ENCODE measurements at regions of chr14 and their contacts with region 1.

Region 1: GRCh38 chr14:75176142-75176820 is at the start of gene TMED10:
- DNase-seq: peak; percentile 93
- H3K4me3 Mint-ChIP-seq: peak within 1 kb of the TSS; percentile 91
- H3K27ac Mint-ChIP-seq: peak within 1 kb of the TSS; percentile 97
- H3K4me1 Mint-ChIP-seq: peaks cover 43% of the 10 kb centered on the region
- H3K27me3 Mint-ChIP-seq: no peaks in the 10 kb centered on the region
- total RNA-seq, gene TMED10: 151 to 156 TPM

Region 2: GRCh38 chr14:74762917-74763802 is 413.1 kb before region 1 on chr14 and contains the start of gene YLPM1:
- CTCF ChIA-PET with region 1: no interaction called
- intact Hi-C with region 1: loop called (anchors 2 kb)
- DNase-seq: peak; percentile 94
- H3K4me3 Mint-ChIP-seq: peak within 1 kb of the TSS; percentile 94
- H3K27ac Mint-ChIP-seq: peak within 1 kb of the TSS; percentile 92
- H3K4me1 Mint-ChIP-seq: peaks cover 48% of the 10 kb centered on the region
- H3K27me3 Mint-ChIP-seq: no peaks in the 10 kb centered on the region
- total RNA-seq, gene YLPM1: 46.5 to 47.0 TPM

Region 3: DNA sequence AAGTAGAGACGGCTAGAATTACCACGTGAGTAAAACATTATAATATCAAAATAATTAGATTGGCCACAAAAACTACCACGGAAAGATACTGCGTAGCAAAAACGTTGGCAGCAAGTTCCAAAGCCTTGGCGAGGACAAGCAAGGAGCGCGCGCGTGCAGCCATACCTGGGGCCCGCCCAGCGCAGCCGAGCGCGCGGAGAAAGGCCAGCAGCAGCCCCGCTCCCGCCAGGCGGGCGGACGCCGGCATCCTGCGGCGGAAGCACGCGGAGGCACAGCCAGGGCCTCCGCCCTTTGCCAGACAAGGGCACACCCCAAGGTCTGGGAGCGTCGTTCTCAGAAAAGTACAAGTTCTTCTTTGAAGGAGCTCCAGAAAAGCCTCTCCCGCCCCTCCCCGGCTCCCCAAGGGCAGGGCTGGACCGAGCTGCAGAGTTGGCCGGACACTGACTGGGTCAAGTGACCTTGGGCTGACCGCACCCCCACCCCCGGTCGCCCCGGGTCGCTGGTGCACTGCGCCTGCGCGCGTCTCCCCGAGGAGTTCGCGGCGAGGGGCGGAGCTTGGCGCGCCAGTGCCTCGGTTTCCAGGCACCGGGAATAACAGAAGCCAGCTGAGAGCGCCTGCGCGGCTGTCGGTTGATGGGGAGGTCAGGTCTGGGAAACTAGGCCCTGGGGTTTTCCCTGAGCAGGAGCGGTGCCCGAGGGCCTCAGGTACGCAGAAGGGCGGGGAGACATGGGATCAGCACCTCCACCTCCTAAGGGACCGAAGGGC is 107.1 kb before region 1 on chr14 and contains the start of gene ZC2HC1C:
- CTCF ChIA-PET with region 1: no interaction called
- intact Hi-C with region 1: loop called (anchors 2 kb)
- DNase-seq: peak; percentile 65
- H3K4me3 Mint-ChIP-seq: peak within 1 kb of the TSS; percentile 11
- H3K27ac Mint-ChIP-seq: no peak within 1 kb of the TSS
- H3K4me1 Mint-ChIP-seq: peaks cover 5% of the 10 kb centered on the region
- H3K27me3 Mint-ChIP-seq: no peaks in the 10 kb centered on the region
- total RNA-seq, gene ZC2HC1C: 0.64 to 0.86 TPM

Region 4: DNA sequence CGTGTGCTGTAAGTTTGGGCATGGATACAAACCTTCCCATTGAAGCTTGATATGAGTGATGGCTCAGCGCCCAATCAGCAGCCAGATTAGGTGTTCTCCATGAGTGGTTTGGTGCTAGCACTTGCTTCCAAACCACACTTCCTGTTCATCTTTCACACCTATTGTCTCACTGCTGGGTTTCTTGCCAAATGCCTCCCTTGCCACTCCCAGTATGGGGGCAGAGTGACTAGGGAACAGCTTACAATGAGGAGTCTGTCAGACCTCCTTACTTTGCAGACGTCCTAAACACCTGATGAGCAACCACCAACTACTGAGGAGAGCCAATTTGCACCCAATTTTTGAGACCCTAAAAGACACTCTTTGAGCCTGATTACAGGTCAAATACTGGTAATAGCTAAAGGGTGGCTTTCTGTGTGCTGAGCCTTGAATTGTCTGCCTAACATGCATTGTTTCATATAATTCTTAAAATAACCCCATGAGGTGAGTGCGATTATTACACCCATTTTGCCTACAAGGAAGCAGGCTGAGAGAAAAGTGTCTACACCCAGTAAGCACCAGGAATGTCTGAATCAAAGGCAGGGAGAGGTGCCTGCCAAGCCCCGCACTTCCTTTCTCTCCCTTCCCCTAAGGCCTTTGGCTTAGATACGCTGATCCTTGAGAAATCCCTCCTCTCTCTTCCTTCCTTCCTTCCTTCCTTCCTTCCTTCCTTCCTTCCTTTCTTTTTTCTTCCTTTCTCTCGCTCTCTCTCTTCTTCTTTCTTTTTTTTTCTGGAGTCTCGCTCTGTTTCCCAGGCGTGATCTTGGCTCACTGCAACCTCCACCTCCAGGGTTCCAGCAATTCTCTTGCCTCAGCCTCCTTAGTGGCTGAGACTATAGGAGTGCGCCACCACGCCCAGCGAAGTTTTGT is 54.1 kb after region 1 on chr14:
- CTCF ChIA-PET with region 1: no interaction called
- intact Hi-C with region 1: loop called (anchors 1 kb)
- DNase-seq: peak; percentile 81
- H3K4me3 Mint-ChIP-seq: no peak overlapping the region
- H3K27ac Mint-ChIP-seq: no peak overlapping the region
- H3K4me1 Mint-ChIP-seq: peaks cover 46% of the 10 kb centered on the region
- H3K27me3 Mint-ChIP-seq: no peaks in the 10 kb centered on the region

Region 5: DNA sequence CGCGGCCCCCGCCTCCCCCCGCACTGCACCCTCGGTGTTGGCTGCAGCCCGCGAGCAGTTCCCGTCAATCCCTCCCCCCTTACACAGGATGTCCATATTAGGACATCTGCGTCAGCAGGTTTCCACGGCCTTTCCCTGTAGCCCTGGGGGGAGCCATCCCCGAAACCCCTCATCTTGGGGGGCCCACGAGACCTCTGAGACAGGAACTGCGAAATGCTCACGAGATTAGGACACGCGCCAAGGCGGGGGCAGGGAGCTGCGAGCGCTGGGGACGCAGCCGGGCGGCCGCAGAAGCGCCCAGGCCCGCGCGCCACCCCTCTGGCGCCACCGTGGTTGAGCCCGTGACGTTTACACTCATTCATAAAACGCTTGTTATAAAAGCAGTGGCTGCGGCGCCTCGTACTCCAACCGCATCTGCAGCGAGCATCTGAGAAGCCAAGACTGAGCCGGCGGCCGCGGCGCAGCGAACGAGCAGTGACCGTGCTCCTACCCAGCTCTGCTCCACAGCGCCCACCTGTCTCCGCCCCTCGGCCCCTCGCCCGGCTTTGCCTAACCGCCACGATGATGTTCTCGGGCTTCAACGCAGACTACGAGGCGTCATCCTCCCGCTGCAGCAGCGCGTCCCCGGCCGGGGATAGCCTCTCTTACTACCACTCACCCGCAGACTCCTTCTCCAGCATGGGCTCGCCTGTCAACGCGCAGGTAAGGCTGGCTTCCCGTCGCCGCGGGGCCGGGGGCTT is 102.3 kb after region 1 on chr14 and contains the start of gene FOS:
- CTCF ChIA-PET with region 1: no interaction called
- intact Hi-C with region 1: loop called (anchors 1 kb)
- DNase-seq: peak; percentile 92
- H3K4me3 Mint-ChIP-seq: peak within 1 kb of the TSS; percentile 93
- H3K27ac Mint-ChIP-seq: peak within 1 kb of the TSS; percentile 90
- H3K4me1 Mint-ChIP-seq: peaks cover 29% of the 10 kb centered on the region
- H3K27me3 Mint-ChIP-seq: peaks cover 26% of the 10 kb centered on the region
- total RNA-seq, gene FOS: 34.5 to 35.7 TPM

Region 6: GRCh38 chr14:75566321-75566720 is 390.0 kb after region 1 on chr14:
- CTCF ChIA-PET with region 1: no interaction called
- intact Hi-C with region 1: loop called (anchors 2 kb)
- DNase-seq: peak; percentile 96
- H3K4me3 Mint-ChIP-seq: peak overlapping the region; percentile 63
- H3K27ac Mint-ChIP-seq: peak overlapping the region; percentile 85
- H3K4me1 Mint-ChIP-seq: peaks cover 77% of the 10 kb centered on the region
- H3K27me3 Mint-ChIP-seq: no peaks in the 10 kb centered on the region